GM12878 (cell line): ENCODE measurements at regions of chr14 and their contacts with region 1.

Region 1: DNA sequence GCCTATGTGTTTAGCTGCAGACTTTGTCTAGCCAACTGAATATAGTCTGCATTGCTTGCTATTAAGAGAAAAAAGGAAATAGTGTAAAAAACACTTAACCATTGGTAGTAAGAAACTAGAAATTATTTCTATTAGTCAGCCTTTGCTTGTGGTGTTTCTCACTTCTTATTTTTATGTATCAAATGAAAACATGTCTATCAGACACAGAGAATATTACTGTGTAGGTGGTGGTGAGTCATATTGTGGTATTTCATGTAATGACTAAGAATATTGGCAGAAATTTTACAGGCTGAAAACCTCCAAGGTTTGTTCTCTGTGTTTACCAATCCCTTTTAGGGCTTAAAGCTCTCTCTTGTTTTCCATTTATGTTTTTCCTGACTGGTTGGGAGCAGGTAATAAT is 87.2 kb downstream of the DAAM1 start:
- DNase-seq: peak; percentile 78
- ATAC-seq: peak; percentile 87
- H3K4me3 ChIP-seq: no peak overlapping the region
- H3K27ac ChIP-seq: peak overlapping the region; percentile 40; the same call in 1 of the 2 replicates
- H3K4me1 ChIP-seq: peaks cover 21% of the 10 kb centered on the region
- H3K27me3 ChIP-seq: no peaks in the 10 kb centered on the region
- CTCF ChIP-seq: no peak
- EP300 ChIP-seq: peak; percentile 88 to 96
- POLR2A ChIP-seq: no peak
- RAD21 ChIP-seq: no peak

Region 2: GRCh38 chr14:58663494-58664415 is 611.9 kb before region 1 on chr14:
- CTCF ChIA-PET with region 1: no interaction called
- POLR2A ChIA-PET with region 1: no interaction called
- RAD21 ChIA-PET with region 1: no interaction called
- SMC1A ChIA-PET with region 1: no interaction called
- in situ Hi-C with region 1: no loop called
- intact Hi-C with region 1: no loop called
- DNase-seq: no peak
- ATAC-seq: peak; percentile 38
- H3K4me3 ChIP-seq: no peak overlapping the region
- H3K27ac ChIP-seq: no peak overlapping the region
- H3K4me1 ChIP-seq: no peaks in the 10 kb centered on the region
- H3K27me3 ChIP-seq: no peaks in the 10 kb centered on the region
- CTCF ChIP-seq: no peak
- EP300 ChIP-seq: no peak
- POLR2A ChIP-seq: no peak
- RAD21 ChIP-seq: no peak

Region 3: DNA sequence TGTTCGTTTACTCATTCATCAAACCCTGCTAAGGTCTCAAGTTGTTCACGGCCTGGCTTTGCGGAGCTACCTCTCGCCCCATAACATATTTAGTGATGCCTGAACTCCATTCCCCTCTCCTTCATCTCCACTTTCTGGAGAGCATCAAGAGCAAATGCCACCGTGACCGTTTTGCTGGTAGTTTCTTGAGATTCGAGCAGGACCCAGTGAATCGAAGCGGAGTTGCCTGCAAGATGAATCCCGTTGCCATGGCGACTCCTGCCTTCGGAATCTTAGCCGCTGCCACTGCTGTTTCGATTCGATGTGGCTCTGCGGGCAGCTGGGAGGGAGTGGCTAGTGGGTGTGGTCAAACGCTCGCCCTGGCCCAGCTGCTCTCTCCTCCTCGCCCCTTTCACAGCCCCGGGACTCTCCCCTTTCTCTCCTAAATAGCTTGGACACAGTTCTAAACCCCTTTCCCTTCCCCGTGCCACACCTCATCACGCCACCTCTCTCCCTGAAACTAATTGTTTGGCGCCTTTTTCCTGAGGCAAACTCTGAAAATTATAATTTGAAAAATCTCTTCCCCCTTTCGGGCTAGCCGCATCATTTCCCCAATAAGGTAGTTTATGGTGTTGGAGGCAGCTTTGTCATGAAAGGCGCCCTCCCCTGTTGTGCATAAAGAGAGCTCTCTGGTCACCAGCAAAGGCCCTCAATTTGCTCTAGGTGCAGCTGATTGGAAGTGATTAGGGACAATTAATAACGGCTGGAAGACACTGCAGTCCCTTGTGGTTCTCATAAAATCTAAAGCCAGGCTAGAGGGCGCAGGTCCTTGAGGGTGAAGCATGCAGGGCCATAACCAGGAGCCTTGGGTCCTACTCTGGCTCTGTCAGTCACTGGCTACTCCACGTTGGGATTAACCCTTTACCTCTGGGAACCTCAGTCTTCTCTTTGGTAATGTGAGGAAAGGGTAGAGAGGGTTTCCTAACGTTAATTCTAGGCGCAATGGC is 85.6 kb before region 1 on chr14:
- CTCF ChIA-PET with region 1: interaction called, 25 read pairs
- POLR2A ChIA-PET with region 1: interaction called, 13 read pairs
- RAD21 ChIA-PET with region 1: interaction called, 38 read pairs
- SMC1A ChIA-PET with region 1: interaction called, 61 read pairs
- in situ Hi-C with region 1: no loop called
- intact Hi-C with region 1: loop called (anchors 2 kb)
- DNase-seq: peak; percentile 69
- ATAC-seq: peak; percentile 74
- H3K4me3 ChIP-seq: peak overlapping the region; percentile 91
- H3K27ac ChIP-seq: peak overlapping the region; percentile 49
- H3K4me1 ChIP-seq: peaks cover 7% of the 10 kb centered on the region
- H3K27me3 ChIP-seq: no peaks in the 10 kb centered on the region
- CTCF ChIP-seq: peak; percentile 15 to 46 (median 34); a peak in 4 of 6 replicates
- EP300 ChIP-seq: peak in 1 of 2 experiments; percentile 50; a peak in 2 of 4 replicates
- POLR2A ChIP-seq: no peak; the same call in 1 of the 2 replicates
- RAD21 ChIP-seq: no peak

Region 4: GRCh38 chr14:59215325-59216181 is 60.1 kb before region 1 on chr14:
- CTCF ChIA-PET with region 1: no interaction called
- POLR2A ChIA-PET with region 1: no interaction called
- RAD21 ChIA-PET with region 1: interaction called, 23 read pairs
- SMC1A ChIA-PET with region 1: interaction called, 20 read pairs
- in situ Hi-C with region 1: no loop called
- intact Hi-C with region 1: loop called (anchors 2 kb)
- DNase-seq: no peak
- ATAC-seq: peak; percentile 19
- H3K4me3 ChIP-seq: 0 out of 2 replicates have a peak overlapping the region, but pooled peaks have one; percentile 11
- H3K27ac ChIP-seq: peak overlapping the region; percentile 59
- H3K4me1 ChIP-seq: peaks cover 15% of the 10 kb centered on the region
- H3K27me3 ChIP-seq: no peaks in the 10 kb centered on the region
- CTCF ChIP-seq: no peak
- EP300 ChIP-seq: no peak
- POLR2A ChIP-seq: no peak
- RAD21 ChIP-seq: no peak

Region 5: DNA sequence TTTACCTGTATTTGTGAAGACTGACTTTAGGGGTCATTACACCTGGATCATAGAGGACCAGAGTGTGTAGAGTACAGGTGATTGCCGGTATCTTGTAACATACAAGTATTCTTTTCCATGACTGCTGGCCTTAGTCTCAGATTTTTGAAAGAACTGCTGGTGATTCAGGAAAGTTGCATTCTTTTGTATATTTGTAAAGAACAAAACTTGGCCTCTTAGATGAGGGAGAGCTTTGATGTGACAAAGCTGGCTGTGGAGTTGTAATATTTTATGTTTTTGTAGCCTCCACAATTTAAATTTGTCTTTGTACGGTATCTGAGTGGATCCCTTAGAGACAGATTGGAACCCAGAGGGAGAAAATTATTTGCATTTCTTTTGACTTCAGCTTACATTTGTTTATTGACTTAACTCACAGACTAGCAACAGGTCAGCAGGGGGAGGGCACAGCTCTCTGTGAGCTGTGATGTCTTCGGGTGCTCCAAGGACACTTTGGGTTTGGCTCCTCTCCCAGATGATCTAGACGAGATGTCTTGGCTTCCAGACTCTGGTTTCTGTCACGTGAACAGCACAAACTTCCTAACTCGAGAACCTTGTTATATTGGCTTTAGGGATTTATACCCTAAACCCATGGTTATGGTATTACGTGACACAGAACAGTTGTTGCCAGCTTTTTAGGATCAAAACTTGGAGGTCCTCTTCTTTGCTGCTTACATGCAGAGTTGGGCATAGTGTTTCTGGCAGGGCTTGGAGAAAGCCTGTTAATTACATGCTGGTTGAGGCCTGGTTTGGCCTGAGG is 21.3 kb before region 1 on chr14:
- CTCF ChIA-PET with region 1: interaction called, 8 read pairs
- POLR2A ChIA-PET with region 1: interaction called, 6 read pairs
- RAD21 ChIA-PET with region 1: interaction called, 20 read pairs
- SMC1A ChIA-PET with region 1: interaction called, 26 read pairs
- in situ Hi-C with region 1: no loop called
- intact Hi-C with region 1: loop called (anchors 2 kb)
- DNase-seq: no peak
- ATAC-seq: peak; percentile 47
- H3K4me3 ChIP-seq: no peak overlapping the region
- H3K27ac ChIP-seq: no peak overlapping the region
- H3K4me1 ChIP-seq: peaks cover 15% of the 10 kb centered on the region
- H3K27me3 ChIP-seq: no peaks in the 10 kb centered on the region
- CTCF ChIP-seq: no peak
- EP300 ChIP-seq: no peak
- POLR2A ChIP-seq: no peak
- RAD21 ChIP-seq: no peak

Region 6: DNA sequence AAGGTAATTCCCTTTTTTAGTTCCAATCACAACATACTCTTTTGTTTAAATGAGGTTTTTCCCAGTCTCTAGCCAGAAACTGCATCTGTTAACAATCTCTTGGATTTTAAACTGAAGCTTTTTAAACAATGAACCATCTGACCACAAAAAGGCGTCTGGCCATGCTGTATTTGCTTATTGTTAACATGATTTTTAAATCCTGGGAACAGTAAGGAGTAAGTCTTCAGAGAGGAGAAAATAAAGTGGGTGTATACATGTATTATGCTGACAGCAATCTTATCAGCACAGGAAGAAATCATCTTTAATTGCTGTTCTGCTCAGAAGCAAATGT is 19.0 kb after region 1 on chr14:
- CTCF ChIA-PET with region 1: no interaction called
- POLR2A ChIA-PET with region 1: interaction called, 6 read pairs
- RAD21 ChIA-PET with region 1: interaction called, 10 read pairs
- SMC1A ChIA-PET with region 1: interaction called, 26 read pairs
- in situ Hi-C with region 1: no loop called
- intact Hi-C with region 1: no loop called
- DNase-seq: no peak
- ATAC-seq: no peak
- H3K4me3 ChIP-seq: no peak overlapping the region
- H3K27ac ChIP-seq: no peak overlapping the region
- H3K4me1 ChIP-seq: peaks cover 6% of the 10 kb centered on the region; the same call in 1 of the 2 replicates
- H3K27me3 ChIP-seq: no peaks in the 10 kb centered on the region
- CTCF ChIP-seq: no peak
- EP300 ChIP-seq: no peak
- POLR2A ChIP-seq: no peak
- RAD21 ChIP-seq: no peak

Region 7: DNA sequence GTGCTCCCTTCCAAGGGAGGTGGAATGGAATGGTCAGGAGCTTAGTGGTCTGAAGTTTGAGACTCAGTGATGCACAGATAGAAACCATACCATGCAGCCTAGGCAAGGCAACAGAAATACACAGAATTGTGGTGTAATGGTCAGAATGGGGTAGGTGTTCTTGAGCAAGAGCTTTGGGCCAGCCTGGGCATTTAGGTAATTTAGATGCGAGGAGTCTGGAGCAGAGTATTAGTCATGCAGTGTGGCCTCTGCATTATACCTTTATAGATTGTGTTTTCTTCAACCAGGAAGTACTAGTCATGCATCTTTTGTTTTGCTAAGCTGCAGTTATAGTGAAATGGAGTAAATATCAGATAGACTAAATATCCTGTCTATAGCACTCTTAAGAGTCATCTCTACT is 31.1 kb after region 1 on chr14:
- CTCF ChIA-PET with region 1: no interaction called
- POLR2A ChIA-PET with region 1: interaction called, 4 read pairs
- RAD21 ChIA-PET with region 1: interaction called, 11 read pairs
- SMC1A ChIA-PET with region 1: interaction called, 21 read pairs
- in situ Hi-C with region 1: no loop called
- intact Hi-C with region 1: no loop called
- DNase-seq: no peak
- ATAC-seq: peak; percentile 35; the same call in 2 of the 3 replicates
- H3K4me3 ChIP-seq: no peak overlapping the region
- H3K27ac ChIP-seq: no peak overlapping the region
- H3K4me1 ChIP-seq: no peaks in the 10 kb centered on the region; the same call in 1 of the 2 replicates
- H3K27me3 ChIP-seq: no peaks in the 10 kb centered on the region
- CTCF ChIP-seq: no peak
- EP300 ChIP-seq: no peak
- POLR2A ChIP-seq: no peak
- RAD21 ChIP-seq: no peak

Region 8: GRCh38 chr14:59711080-59711479 is 435.4 kb after region 1 on chr14:
- CTCF ChIA-PET with region 1: no interaction called
- POLR2A ChIA-PET with region 1: no interaction called
- RAD21 ChIA-PET with region 1: no interaction called
- SMC1A ChIA-PET with region 1: no interaction called
- in situ Hi-C with region 1: no loop called
- intact Hi-C with region 1: no loop called
- DNase-seq: no peak
- ATAC-seq: no peak
- H3K4me3 ChIP-seq: no peak overlapping the region
- H3K27ac ChIP-seq: no peak overlapping the region
- H3K4me1 ChIP-seq: no peaks in the 10 kb centered on the region
- H3K27me3 ChIP-seq: no peaks in the 10 kb centered on the region
- CTCF ChIP-seq: no peak
- EP300 ChIP-seq: no peak
- POLR2A ChIP-seq: no peak
- RAD21 ChIP-seq: no peak